H1 (cell line): ENCODE measurements at regions of chr14 and their contacts with region 1.

Region 1: GRCh38 chr14:22852940-22853767 is 16.8 kb downstream of the MMP14 start:
- DNase-seq: peak in 1 of 2 experiments; percentile 100
- H3K4me3 ChIP-seq: peak overlapping the region in 3 of 4 experiments; percentile 32 to 58 (median 42); a peak in 7 of 8 replicates
- H3K27ac ChIP-seq: no peak overlapping the region
- H3K4me1 ChIP-seq: peaks cover 0 to 17% (median 7%) of the 10 kb centered on the region in 4 experiments; a peak in 6 of 7 replicates
- H3K27me3 ChIP-seq: no peaks in the 10 kb centered on the region
- CTCF ChIP-seq: peak; percentile 95 to 97 (median 96)
- EP300 ChIP-seq: no peak
- POLR2A ChIP-seq: no peak; a peak in 1 of 3 replicates
- RAD21 ChIP-seq: peak; percentile 94 to 96

Region 2: GRCh38 chr14:22748631-22749068 is 104.5 kb before region 1 on chr14:
- CTCF ChIA-PET with region 1: no interaction called
- POLR2A ChIA-PET with region 1: no interaction called
- DNase-seq: no peak
- H3K4me3 ChIP-seq: no peak overlapping the region
- H3K27ac ChIP-seq: no peak overlapping the region
- H3K4me1 ChIP-seq: no peaks in the 10 kb centered on the region
- H3K27me3 ChIP-seq: no peaks in the 10 kb centered on the region
- CTCF ChIP-seq: no peak
- EP300 ChIP-seq: no peak
- POLR2A ChIP-seq: no peak
- RAD21 ChIP-seq: no peak

Region 3: DNA sequence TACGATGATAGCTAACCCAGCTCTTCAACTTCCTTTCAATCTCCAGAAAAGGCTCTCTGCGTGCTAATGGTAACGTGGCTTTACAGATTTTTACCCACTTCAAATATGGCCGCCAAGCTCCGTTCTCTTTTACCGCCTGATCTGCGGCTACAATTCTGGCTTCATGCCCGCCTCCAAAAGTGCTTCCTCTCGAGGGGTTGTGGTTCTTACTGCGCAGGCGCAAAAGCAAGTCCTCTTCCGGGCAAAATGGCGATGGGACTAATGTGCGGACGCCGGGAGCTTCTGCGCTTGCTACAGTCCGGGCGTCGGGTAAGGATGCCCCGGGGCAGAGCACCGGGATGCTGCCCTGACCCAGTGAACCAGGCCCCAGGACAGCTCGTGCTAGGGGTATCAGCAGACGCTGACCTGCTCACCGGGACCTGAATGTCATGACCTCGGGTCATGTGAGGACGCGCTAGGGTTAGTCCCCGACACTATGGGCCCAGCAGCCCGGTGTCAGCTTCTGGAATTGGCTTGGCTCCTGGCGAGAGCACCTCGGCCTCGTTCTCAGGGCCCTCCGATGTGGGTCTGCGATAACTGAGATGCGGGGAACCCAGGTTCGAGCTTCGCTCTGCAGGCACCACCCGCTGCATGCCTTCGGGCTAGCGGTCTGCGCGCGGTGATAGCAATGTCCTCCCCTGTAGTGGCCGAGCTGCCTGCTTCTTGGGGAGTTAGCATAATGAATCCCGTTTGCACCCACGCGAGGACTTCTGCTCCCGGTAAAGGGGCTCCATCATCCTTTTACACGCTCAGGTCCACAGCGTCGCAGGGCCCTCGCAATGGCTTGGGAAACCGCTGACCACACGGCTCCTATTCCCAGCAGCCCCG is 86.5 kb before region 1 on chr14 and contains the start of gene OXA1L:
- CTCF ChIA-PET with region 1: interaction called, 15 read pairs
- POLR2A ChIA-PET with region 1: interaction called, 5 read pairs
- DNase-seq: peak; percentile 78 to 90
- H3K4me3 ChIP-seq: peak within 1 kb of the TSS; percentile 87 to 97 (median 94)
- H3K27ac ChIP-seq: peak within 1 kb of the TSS; percentile 91
- H3K4me1 ChIP-seq: peaks cover 0 to 2% (median 0%) of the 10 kb centered on the region in 4 experiments; a peak in 2 of 7 replicates
- H3K27me3 ChIP-seq: no peaks in the 10 kb centered on the region
- CTCF ChIP-seq: no peak
- EP300 ChIP-seq: 0 out of 3 replicates have a peak, but pooled peaks of 1 of the 2 experiments have one; percentile 13
- POLR2A ChIP-seq: peak; percentile 50 to 81; a peak in 2 of 3 replicates
- RAD21 ChIP-seq: no peak
- total RNA-seq, gene OXA1L: 125 and 129 TPM in 2 replicates

Region 4: DNA sequence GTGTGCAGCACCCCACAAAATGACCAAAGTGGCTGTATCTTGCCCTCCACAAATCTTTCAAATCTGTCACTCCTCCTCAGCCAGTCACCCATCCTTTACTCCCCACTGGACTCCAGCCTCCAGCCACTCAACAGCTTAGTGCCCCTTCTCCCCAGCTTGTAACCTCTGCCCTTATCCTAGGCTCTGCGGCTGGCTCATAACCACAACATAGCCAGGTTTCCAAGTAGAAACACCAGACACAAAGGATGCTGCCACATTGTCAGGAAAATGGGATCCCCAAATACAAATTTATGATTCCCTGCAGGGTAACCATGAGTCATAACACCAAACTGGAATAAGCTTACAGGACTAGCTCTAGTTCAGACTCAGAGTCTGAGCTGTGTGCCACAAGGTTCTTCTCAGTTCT is 71.6 kb before region 1 on chr14:
- CTCF ChIA-PET with region 1: interaction called, 34 read pairs
- POLR2A ChIA-PET with region 1: interaction called, 3 read pairs
- DNase-seq: no peak
- H3K4me3 ChIP-seq: no peak overlapping the region
- H3K27ac ChIP-seq: no peak overlapping the region
- H3K4me1 ChIP-seq: no peaks in the 10 kb centered on the region; a peak in 1 of 7 replicates
- H3K27me3 ChIP-seq: no peaks in the 10 kb centered on the region
- CTCF ChIP-seq: no peak
- EP300 ChIP-seq: no peak
- POLR2A ChIP-seq: no peak
- RAD21 ChIP-seq: no peak

Region 5: DNA sequence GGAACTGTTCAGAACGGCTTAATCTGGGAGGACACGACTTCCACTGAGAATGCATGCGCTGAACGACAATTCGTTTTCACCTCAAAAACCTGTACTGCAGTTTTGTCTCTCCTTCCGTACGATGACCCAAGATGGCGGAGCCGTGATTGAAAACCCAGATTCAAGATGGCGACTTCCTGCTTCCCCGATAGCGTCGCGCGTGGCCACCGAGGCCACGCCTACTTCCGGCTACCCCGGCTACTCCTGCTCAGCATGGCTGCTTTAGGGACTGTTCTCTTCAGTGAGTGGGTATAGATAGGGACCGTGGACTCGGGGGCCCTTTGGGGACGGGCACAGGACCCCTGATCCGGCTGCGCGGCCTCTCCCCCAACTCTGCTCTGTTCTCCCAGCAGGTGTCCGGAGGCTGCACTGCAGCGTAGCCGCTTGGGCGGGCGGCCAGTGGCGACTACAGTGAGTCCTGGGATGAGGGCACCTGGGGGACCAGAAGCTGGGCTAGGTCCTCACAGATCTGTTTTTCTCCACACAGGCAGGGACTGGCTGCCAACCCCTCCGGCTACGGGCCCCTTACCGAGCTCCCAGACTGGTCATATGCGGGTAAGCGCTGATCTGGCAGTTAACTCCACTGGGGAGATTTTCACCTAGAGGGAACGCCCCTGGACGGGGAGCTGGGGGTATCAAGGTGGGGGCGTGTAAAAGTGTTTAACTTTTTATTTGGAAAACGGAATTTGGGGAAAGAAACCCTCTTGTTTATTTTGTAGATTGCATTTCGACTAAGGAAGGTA is 23.3 kb before region 1 on chr14 and contains the start of gene MRPL52:
- CTCF ChIA-PET with region 1: interaction called, 1,562 read pairs
- POLR2A ChIA-PET with region 1: interaction called, 203 read pairs
- DNase-seq: peak in 1 of 2 experiments; percentile 80
- H3K4me3 ChIP-seq: peak within 1 kb of the TSS; percentile 86 to 89 (median 88)
- H3K27ac ChIP-seq: peak within 1 kb of the TSS; percentile 43; the same call in 1 of the 2 replicates
- H3K4me1 ChIP-seq: peaks cover 0 to 5% (median 0%) of the 10 kb centered on the region in 4 experiments; a peak in 2 of 7 replicates
- H3K27me3 ChIP-seq: no peaks in the 10 kb centered on the region
- CTCF ChIP-seq: no peak
- EP300 ChIP-seq: 0 out of 3 replicates have a peak, but pooled peaks of 1 of the 2 experiments have one; percentile 29
- POLR2A ChIP-seq: peak in 1 of 2 experiments; percentile 61; a peak in 2 of 3 replicates
- RAD21 ChIP-seq: no peak
- total RNA-seq, gene MRPL52: 172 and 176 TPM in 2 replicates

Region 6: GRCh38 chr14:22872033-22872832 is 19.1 kb after region 1 on chr14:
- CTCF ChIA-PET with region 1: interaction called, 88 read pairs
- POLR2A ChIA-PET with region 1: interaction called, 3 read pairs
- DNase-seq: peak in 1 of 2 experiments; percentile 94
- H3K4me3 ChIP-seq: peak overlapping the region; percentile 64 to 86 (median 80)
- H3K27ac ChIP-seq: no peak overlapping the region
- H3K4me1 ChIP-seq: peaks cover 0 to 9% (median 3%) of the 10 kb centered on the region in 4 experiments; a peak in 4 of 7 replicates
- H3K27me3 ChIP-seq: no peaks in the 10 kb centered on the region
- CTCF ChIP-seq: peak; percentile 81 to 94 (median 91)
- EP300 ChIP-seq: 0 out of 3 replicates have a peak, but pooled peaks of 1 of the 2 experiments have one; percentile 59
- POLR2A ChIP-seq: peak in 1 of 2 experiments; percentile 28; a peak in 1 of 3 replicates
- RAD21 ChIP-seq: peak; percentile 75 to 84

Region 7: GRCh38 chr14:22900081-22900799 is 47.1 kb after region 1 on chr14:
- CTCF ChIA-PET with region 1: interaction called, 40 read pairs
- POLR2A ChIA-PET with region 1: no interaction called
- DNase-seq: peak in 1 of 2 experiments; percentile 58
- H3K4me3 ChIP-seq: 0 out of 8 replicates have a peak overlapping the region, but pooled peaks of 1 of the 4 experiments have one; percentile 13
- H3K27ac ChIP-seq: no peak overlapping the region
- H3K4me1 ChIP-seq: peaks cover 0 to 8% (median 4%) of the 10 kb centered on the region in 4 experiments; a peak in 2 of 7 replicates
- H3K27me3 ChIP-seq: peaks cover 10 to 35% (median 28%) of the 10 kb centered on the region in 4 experiments
- CTCF ChIP-seq: peak; percentile 1 to 75 (median 64)
- EP300 ChIP-seq: no peak
- POLR2A ChIP-seq: no peak
- RAD21 ChIP-seq: peak; percentile 64 to 75